MCF 10A (cell line): ENCODE measurements at regions of chr4 and their contacts with region 1.

Region 1: DNA sequence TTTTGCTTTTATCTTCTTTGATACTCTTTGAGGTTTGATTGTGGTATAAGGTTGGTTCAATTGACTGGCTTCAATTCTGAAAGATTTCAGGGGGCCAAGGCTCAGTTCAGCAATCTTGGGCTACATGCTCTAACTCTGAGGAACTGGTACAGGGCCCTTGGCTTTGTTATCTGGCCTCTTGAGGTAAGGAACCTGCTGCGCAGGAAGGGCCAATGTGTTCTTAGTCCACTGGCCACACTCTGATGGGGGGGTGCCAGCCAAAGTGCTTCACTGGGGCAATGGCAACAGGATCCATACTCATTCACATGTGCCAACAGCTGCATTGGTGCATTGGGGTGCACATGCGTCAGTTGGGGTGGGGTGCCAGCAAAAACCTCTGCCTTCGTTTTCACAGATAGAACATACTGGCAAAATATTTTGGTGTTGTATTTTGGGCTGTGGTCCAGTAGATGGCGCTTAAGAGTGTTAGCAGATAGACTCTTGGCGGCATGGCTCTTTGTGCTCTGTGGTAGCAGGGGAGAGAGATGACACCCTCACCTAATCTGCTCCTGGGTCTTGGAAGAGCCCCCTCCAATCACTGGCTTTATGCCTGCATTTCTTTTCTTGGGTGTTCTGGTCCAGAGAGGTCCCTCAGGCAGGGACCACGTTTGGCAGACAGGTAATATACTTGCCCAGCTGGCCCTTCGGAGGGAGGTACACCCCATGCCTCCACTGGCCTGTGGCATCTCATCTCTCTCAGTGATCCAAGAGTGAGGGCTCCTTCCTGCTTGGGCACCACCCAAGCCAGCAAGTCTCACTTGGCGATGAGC is 42.9 kb downstream of the NDST3 start:
- DNase-seq: peak; percentile 59
- H3K4me3 Mint-ChIP-seq: no peak overlapping the region
- H3K27ac Mint-ChIP-seq: no peak overlapping the region
- H3K4me1 Mint-ChIP-seq: no peaks in the 10 kb centered on the region
- H3K27me3 Mint-ChIP-seq: no peaks in the 10 kb centered on the region
- CTCF ChIP-seq: peak; percentile 62

Region 2: GRCh38 chr4:117831060-117831683 is 246.0 kb before region 1 on chr4:
- CTCF ChIA-PET with region 1: no interaction called
- POLR2A ChIA-PET with region 1: no interaction called
- intact Hi-C with region 1: no loop called
- DNase-seq: no peak
- H3K4me3 Mint-ChIP-seq: no peak overlapping the region
- H3K27ac Mint-ChIP-seq: no peak overlapping the region
- H3K4me1 Mint-ChIP-seq: no peaks in the 10 kb centered on the region
- H3K27me3 Mint-ChIP-seq: no peaks in the 10 kb centered on the region
- CTCF ChIP-seq: no peak

Region 3: GRCh38 chr4:118139241-118139640 is 62.1 kb after region 1 on chr4:
- CTCF ChIA-PET with region 1: no interaction called
- POLR2A ChIA-PET with region 1: no interaction called
- intact Hi-C with region 1: no loop called
- DNase-seq: no peak
- H3K4me3 Mint-ChIP-seq: no peak overlapping the region
- H3K27ac Mint-ChIP-seq: no peak overlapping the region
- H3K4me1 Mint-ChIP-seq: no peaks in the 10 kb centered on the region
- H3K27me3 Mint-ChIP-seq: no peaks in the 10 kb centered on the region
- CTCF ChIP-seq: no peak

Region 4: GRCh38 chr4:118215826-118216225 is 138.7 kb after region 1 on chr4:
- CTCF ChIA-PET with region 1: interaction called, 11 read pairs
- POLR2A ChIA-PET with region 1: no interaction called
- intact Hi-C with region 1: no loop called
- DNase-seq: no peak
- H3K4me3 Mint-ChIP-seq: no peak overlapping the region
- H3K27ac Mint-ChIP-seq: no peak overlapping the region
- H3K4me1 Mint-ChIP-seq: no peaks in the 10 kb centered on the region
- H3K27me3 Mint-ChIP-seq: no peaks in the 10 kb centered on the region
- CTCF ChIP-seq: no peak

Region 5: GRCh38 chr4:118224239-118224829 is 147.2 kb after region 1 on chr4:
- CTCF ChIA-PET with region 1: interaction called, 42 read pairs
- POLR2A ChIA-PET with region 1: interaction called, 3 read pairs
- intact Hi-C with region 1: loop called (anchors 1 kb)
- DNase-seq: peak; percentile 75
- H3K4me3 Mint-ChIP-seq: no peak overlapping the region
- H3K27ac Mint-ChIP-seq: no peak overlapping the region
- H3K4me1 Mint-ChIP-seq: no peaks in the 10 kb centered on the region
- H3K27me3 Mint-ChIP-seq: no peaks in the 10 kb centered on the region
- CTCF ChIP-seq: peak; percentile 70

Region 6: GRCh38 chr4:118270492-118270891 is 193.3 kb after region 1 on chr4:
- CTCF ChIA-PET with region 1: interaction called, 12 read pairs
- POLR2A ChIA-PET with region 1: no interaction called
- intact Hi-C with region 1: loop called (anchors 2 kb)
- DNase-seq: peak; percentile 69
- H3K4me3 Mint-ChIP-seq: no peak overlapping the region
- H3K27ac Mint-ChIP-seq: no peak overlapping the region
- H3K4me1 Mint-ChIP-seq: no peaks in the 10 kb centered on the region
- H3K27me3 Mint-ChIP-seq: no peaks in the 10 kb centered on the region
- CTCF ChIP-seq: peak; percentile 54